Tibial artery (tissue), 4 donors: ENCODE measurements at regions of chr15 and their contacts with region 1.

Region 1: DNA sequence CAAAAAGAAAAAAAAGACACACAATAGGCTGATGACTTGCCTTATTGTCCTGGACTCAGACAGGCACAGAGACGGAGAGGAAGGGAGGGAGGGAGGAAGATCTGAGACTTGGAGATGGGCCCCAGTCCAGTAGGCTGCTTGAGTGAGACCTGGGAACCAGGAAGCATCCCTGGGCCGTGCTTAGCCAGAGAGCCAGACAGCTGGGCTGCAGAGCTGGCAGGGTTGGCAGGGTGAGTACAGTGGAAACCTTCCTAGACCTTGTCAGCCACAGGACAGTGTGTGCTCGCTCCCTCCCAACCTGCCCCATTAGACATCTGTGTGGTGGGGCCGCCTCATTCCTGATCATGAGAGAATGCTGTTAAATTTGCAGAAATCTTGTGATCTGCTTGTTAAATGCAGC is 107.9 kb upstream of the ALDH1A3 start:
- DNase-seq: no peak
- H3K4me3 ChIP-seq: no peak overlapping the region
- H3K27ac ChIP-seq: no peak overlapping the region
- H3K4me1 ChIP-seq: no peaks in the 10 kb centered on the region
- H3K27me3 ChIP-seq: peaks cover 0 to 9% of the 10 kb centered on the region in 2 donors
- CTCF ChIP-seq: no peak

Region 2: GRCh38 chr15:100175393-100176114 is 596.2 kb before region 1 on chr15:
- intact Hi-C with region 1: loop called (anchors 5 kb)
- DNase-seq: no peak
- H3K4me3 ChIP-seq: no peak overlapping the region
- H3K27ac ChIP-seq: peak overlapping the region; percentile 35 to 53
- H3K4me1 ChIP-seq: peaks cover 0 to 27% (median 14%) of the 10 kb centered on the region in 4 donors
- H3K27me3 ChIP-seq: no peaks in the 10 kb centered on the region
- CTCF ChIP-seq: no peak

Region 3: GRCh38 chr15:101358895-101359294 is 587.1 kb after region 1 on chr15:
- intact Hi-C with region 1: no loop called
- DNase-seq: peak in 1 of 2 donors; percentile 38
- H3K4me3 ChIP-seq: no peak overlapping the region
- H3K27ac ChIP-seq: no peak overlapping the region
- H3K4me1 ChIP-seq: peaks cover 0 to 6% (median 3%) of the 10 kb centered on the region in 4 donors
- H3K27me3 ChIP-seq: peaks cover 0 to 3% of the 10 kb centered on the region in 2 donors
- CTCF ChIP-seq: no peak